ENCODE measurements at regions of chr7 and their contacts with region 1.

Region 1: DNA sequence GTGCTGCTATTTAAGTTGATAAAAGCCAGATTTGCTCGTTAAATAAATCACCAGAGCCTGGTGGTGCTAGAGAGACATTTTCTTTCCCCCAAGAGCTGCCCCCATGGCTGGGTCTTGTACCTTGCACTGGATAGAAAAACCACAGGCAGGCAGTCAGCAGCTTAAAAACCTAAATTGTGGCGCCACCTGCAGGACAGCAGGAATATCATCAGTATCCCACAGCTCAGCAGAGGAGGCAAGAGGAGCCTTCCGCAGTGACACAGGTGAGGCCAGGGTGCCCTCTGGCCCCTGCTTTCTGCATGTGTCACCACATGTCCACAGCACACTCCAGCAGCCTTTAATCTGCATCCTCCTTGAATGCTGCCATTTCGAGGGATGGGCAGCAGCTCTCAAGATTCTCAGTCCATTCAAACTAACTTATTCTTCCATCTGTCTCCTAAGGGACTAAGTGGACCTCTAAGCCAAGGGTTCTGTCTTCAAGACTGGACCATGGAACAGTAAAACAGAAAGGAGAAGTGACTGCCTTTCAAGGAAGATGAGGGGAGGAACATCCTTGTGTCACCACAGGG is 4.5 kb upstream of the PLXNA4 start:
- H3K4me3 ChIP-seq: no peak overlapping the region
- H3K27ac ChIP-seq: no peak overlapping the region
- H3K4me1 ChIP-seq: peaks cover 3% of the 10 kb centered on the region; the same call in 1 of the 2 replicates
- CTCF ChIP-seq: peak; percentile 37; the same call in 1 of the 2 replicates

Region 2: DNA sequence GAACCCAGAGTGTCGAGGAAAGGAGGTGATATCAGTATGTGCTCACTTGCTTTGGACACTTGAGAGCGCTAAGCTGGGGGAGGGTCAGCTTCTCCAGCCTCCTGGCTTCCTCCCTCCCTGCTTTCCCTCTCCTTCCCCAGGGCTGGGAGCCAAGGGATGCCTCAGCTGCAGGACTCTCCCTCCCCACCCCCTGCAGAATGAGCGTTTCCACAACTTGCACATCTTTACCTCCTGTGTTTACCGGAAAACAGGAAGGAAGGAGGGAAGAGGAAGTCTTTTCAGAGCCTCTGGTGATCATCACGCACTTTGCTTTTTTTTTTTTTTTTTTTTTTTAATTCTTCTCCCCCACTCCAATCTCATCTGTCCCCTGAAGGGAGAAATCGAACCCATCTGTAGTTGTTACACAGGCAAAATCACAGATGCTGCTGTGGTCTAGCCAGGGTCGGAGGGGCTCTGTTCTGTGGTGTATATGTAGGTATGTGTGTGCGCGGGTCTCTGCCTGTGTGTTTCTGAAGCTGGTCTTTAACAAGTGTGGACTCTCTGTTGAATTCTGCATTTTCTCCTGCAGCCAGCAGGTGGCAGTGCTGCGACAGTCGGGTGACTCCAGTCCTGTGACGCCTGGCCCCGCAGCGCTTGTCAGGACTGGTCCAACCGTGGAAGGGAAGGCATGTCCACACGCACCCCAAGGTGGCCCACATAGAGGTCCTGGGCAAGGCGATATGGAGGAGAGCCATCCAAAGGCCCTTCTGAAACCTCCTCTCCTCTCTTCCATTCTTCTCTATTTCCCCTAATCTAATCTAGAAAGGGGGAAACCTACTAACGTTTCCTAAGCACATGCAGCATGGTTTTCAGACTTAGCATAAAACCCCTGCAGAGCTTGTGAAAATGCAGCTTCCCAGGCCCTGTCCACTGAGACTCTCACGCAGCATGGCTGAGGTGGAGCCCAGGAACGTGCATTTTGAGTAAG is 262.2 kb before region 1 on chr7:
- CTCF ChIA-PET with region 1: interaction called, 27 read pairs
- POLR2A ChIA-PET with region 1: no interaction called
- H3K4me3 ChIP-seq: no peak overlapping the region
- H3K27ac ChIP-seq: no peak overlapping the region
- H3K4me1 ChIP-seq: no peaks in the 10 kb centered on the region
- CTCF ChIP-seq: peak; percentile 90

Region 3: GRCh38 chr7:132518102-132518838 is 62.5 kb before region 1 on chr7:
- CTCF ChIA-PET with region 1: interaction called, 10 read pairs
- POLR2A ChIA-PET with region 1: no interaction called
- H3K4me3 ChIP-seq: no peak overlapping the region
- H3K27ac ChIP-seq: no peak overlapping the region
- H3K4me1 ChIP-seq: no peaks in the 10 kb centered on the region
- CTCF ChIP-seq: no peak

Region 4: GRCh38 chr7:132568962-132569361 is 11.8 kb before region 1 on chr7:
- CTCF ChIA-PET with region 1: interaction called, 10 read pairs
- POLR2A ChIA-PET with region 1: no interaction called
- H3K4me3 ChIP-seq: no peak overlapping the region
- H3K27ac ChIP-seq: no peak overlapping the region
- H3K4me1 ChIP-seq: no peaks in the 10 kb centered on the region
- CTCF ChIP-seq: no peak

Measured in HEK293 (cell line).